ENCODE measurements at regions of chr5 and their contacts with region 1.

Region 1: GRCh38 chr5:134026521-134027268 is 21.9 kb upstream of the VDAC1 start:
- DNase-seq: peak; percentile 80
- H3K4me3 ChIP-seq: no peak overlapping the region
- H3K27ac ChIP-seq: no peak overlapping the region
- H3K4me1 ChIP-seq: no peaks in the 10 kb centered on the region
- H3K27me3 ChIP-seq: no peaks in the 10 kb centered on the region
- CTCF ChIP-seq: peak; percentile 58
- EP300 ChIP-seq: no peak
- RAD21 ChIP-seq: peak; percentile 64

Region 2: GRCh38 chr5:133644000-133644865 is 382.5 kb before region 1 on chr5:
- CTCF ChIA-PET with region 1: no interaction called
- POLR2A ChIA-PET with region 1: no interaction called
- DNase-seq: no peak
- H3K4me3 ChIP-seq: no peak overlapping the region
- H3K27ac ChIP-seq: no peak overlapping the region
- H3K4me1 ChIP-seq: no peaks in the 10 kb centered on the region
- H3K27me3 ChIP-seq: no peaks in the 10 kb centered on the region
- CTCF ChIP-seq: no peak
- EP300 ChIP-seq: no peak
- RAD21 ChIP-seq: no peak

Region 3: DNA sequence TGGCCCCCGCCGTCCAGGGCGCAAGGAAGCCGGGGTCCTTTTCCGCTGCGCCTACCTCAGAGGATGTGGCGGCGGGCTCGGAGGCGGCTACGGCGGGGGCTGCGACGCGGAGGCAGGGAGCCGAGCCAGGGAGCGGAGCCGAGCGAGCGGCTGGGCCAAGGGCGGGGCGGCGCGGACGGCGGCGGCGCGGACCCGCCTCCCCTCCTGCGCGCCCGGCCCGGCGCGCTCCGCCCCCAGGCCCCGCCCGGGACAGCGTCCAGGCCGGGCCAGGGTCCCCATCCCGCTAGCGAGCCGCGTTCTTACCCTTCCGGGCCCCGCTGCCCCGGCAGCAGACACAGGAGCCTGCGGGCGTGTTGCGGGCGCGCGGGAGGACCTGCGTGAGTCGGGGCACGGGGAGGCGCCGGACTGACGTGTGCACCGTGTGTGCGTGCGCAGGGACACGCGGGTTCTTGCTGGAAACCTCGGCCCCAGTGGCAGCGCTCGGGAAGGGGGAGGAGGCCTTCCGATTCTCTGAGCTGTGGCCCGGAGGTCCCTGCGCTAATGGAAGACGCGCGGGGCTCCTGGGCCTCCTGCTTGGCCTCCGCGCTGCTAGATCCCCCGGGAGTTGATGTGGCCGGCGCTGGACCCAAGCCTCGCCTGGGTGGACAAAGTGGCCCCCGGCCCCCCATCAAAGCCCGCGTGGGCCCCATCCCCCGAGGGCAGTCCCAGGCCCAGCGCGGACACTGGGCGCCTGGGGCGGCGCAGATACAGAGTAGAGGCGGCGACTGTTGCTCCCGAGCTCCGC is 21.9 kb before region 1 on chr5 and contains the start of gene VDAC1:
- CTCF ChIA-PET with region 1: interaction called, 14 read pairs
- POLR2A ChIA-PET with region 1: no interaction called
- DNase-seq: peak; percentile 98
- H3K4me3 ChIP-seq: peak within 1 kb of the TSS; percentile 75 to 83
- H3K27ac ChIP-seq: peak within 1 kb of the TSS; percentile 92 to 95
- H3K4me1 ChIP-seq: peaks cover 16 to 36% of the 10 kb centered on the region in 2 experiments; a peak in 2 of 4 replicates
- H3K27me3 ChIP-seq: no peaks in the 10 kb centered on the region
- CTCF ChIP-seq: no peak
- EP300 ChIP-seq: no peak
- RAD21 ChIP-seq: no peak
- polyA plus RNA-seq, gene VDAC1: 155 and 166 TPM in 2 replicates

Measured in SK-N-SH (cell line).